ENCODE measurements at regions of chr6 and their contacts with region 1.

Region 1: GRCh38 chr6:14799928-14800327 is 445.9 kb upstream of the JARID2 start:
- DNase-seq: peak in 1 of 2 donors; percentile 53
- H3K4me3 ChIP-seq: no peak overlapping the region
- H3K27ac ChIP-seq: no peak overlapping the region
- H3K4me1 ChIP-seq: peaks cover 6 to 8% of the 10 kb centered on the region in 2 donors
- H3K27me3 ChIP-seq: no peaks in the 10 kb centered on the region
- CTCF ChIP-seq: peak in 1 of 3 donors; percentile 5
- POLR2A ChIP-seq: no peak

Region 2: DNA sequence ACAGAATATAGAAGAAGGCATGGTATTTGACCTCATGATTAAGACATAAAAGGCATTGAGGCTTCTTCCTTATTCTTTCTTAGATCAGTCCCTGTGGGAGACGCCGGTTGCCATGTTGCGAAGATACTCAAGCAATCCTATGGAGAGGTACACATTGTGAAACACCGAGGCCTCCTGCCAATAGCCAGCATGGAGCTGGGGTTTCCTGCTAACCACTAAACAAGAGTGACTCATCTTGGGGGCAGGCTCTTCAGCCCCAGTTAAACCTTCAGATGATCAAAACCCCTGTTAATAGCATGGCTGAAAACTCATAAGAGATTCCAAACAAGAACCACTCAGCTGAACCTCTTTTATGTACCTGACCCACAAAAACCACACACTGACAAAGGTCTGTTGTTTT is 203.5 kb before region 1 on chr6:
- intact Hi-C with region 1: loop called (anchors 5 kb)
- DNase-seq: no peak
- H3K4me3 ChIP-seq: no peak overlapping the region
- H3K27ac ChIP-seq: no peak overlapping the region
- H3K4me1 ChIP-seq: no peaks in the 10 kb centered on the region
- H3K27me3 ChIP-seq: no peaks in the 10 kb centered on the region
- CTCF ChIP-seq: no peak
- POLR2A ChIP-seq: no peak

Region 3: DNA sequence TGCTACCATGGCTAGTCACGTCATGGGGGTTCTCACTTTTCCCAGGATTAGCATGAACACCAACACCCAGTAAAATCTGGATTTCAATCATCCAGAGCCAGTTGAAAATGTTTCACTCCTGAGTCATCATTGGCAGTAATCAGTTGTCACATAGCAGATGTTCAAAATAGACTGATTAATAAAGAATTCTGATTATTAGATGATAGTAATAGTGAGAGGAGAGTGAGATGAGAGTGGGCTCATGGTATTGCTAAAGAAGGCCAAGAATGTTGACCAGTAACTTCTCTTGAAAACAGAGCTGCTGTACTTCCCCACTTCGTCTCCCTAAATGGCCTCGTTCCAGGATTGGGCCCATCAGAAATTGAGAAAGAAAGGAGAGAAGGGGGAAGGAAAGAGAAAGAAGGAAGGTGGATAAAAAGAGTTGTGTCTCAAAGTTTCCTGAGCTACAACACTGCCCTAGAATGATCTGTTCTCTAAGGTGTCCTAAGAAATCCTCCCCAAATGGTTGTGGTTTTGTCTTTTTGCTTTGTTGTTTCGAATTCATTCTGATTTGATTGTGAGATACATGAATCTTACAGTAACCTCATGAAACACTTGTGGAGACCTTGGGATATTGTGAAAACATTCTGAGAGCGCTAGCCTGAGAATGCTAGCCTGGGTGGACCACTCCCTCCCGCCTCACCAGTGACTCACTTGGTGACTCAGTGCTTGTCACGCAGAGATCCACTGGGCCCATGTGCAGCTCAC is 56.3 kb before region 1 on chr6:
- intact Hi-C with region 1: loop called (anchors 2 kb)
- DNase-seq: peak in 1 of 2 donors; percentile 24
- H3K4me3 ChIP-seq: no peak overlapping the region
- H3K27ac ChIP-seq: peak overlapping the region in 1 of 2 donors; percentile 58
- H3K4me1 ChIP-seq: no peaks in the 10 kb centered on the region
- H3K27me3 ChIP-seq: no peaks in the 10 kb centered on the region
- CTCF ChIP-seq: no peak
- POLR2A ChIP-seq: no peak

Region 4: DNA sequence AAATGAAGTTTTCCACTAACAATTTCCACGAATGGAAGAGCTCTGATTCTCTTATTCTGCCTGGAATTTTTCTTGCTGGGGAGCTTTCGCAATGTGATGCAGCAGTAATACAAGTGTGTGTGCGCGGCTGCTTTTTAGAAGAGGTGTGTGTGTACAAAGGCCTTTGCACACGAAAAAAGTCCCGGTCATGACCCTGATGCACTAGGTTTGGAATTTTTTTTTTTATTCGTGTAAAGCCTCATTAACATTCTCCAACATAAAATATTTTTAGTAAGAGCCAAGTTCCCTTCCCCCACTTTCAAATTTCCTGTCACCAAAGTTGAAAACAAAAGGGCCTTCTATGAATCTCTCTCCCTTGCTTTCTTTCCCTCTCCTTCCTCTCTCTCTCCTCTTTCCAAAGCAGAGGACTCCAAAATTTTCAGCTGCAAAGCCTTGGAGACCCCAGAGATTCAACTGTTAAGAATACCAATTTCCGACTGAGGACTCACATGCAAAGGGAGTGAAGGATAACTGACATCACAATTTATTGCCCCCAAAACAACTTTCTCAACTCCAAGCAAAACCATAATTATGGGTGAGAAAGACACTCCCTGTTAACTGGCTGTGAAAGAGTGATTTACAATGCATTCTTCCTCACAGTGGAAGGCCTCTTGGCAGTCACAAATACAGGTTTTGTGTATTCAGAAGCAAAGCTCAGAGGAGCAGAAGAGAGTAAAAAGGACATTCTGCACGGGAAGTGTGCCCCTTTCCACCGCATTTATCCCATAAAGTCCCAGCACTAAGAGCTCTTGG is 24.8 kb after region 1 on chr6:
- intact Hi-C with region 1: loop called (anchors 1 kb)
- DNase-seq: no peak
- H3K4me3 ChIP-seq: no peak overlapping the region
- H3K27ac ChIP-seq: peak overlapping the region; percentile 43 to 46
- H3K4me1 ChIP-seq: no peaks in the 10 kb centered on the region
- H3K27me3 ChIP-seq: no peaks in the 10 kb centered on the region
- CTCF ChIP-seq: no peak
- POLR2A ChIP-seq: no peak